Esophagus squamous epithelium (tissue), 5 donors: ENCODE measurements at regions of chr6 and their contacts with region 1.

Region 1: DNA sequence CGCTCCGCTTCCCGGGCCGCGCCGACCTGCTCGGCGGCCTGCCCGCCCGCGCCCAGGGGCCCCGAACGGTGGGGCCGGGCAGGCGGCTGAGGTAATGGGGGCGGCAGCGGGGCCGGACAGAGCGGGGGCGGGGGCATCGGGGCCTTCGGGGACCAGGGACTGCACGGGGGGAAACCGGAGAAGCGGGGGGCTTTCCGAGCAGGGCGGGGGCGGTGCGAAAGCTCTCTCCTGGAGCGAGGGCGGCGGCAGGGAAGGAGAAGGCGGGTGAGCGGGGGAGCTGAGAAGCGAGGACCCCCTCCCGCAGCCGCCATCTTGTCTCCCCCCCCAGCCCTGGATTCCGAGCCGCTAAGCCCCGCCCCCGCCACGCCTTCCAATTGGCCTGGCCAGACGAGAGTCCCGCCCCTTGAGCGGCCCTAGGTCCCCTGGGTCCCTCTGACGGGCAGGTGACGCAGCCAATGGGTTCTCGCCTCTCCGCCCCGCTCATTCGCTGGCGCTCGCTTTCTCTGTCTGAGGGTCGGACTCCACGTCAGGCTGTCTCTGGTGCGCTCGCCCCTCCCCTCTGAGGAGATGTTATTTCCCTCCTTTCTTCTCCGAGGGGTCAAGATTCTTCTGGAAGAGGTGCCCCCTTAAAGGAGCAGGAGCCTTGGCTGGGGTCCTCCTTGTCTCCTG is 470 bp downstream of the BRPF3 start:
- DNase-seq: peak; percentile 86
- H3K4me3 ChIP-seq: peak overlapping the region; percentile 80 to 97 (median 90)
- H3K27ac ChIP-seq: peak overlapping the region; percentile 97 to 99 (median 98)
- H3K4me1 ChIP-seq: peaks cover 9 to 41% (median 18%) of the 10 kb centered on the region in 3 donors
- H3K27me3 ChIP-seq: no peaks in the 10 kb centered on the region
- CTCF ChIP-seq: no peak
- POLR2A ChIP-seq: peak in 2 of 4 donors; percentile 18 to 75

Region 2: GRCh38 chr6:36129941-36130666 is 66.9 kb before region 1 on chr6 and contains the start of gene MAPK13:
- intact Hi-C with region 1: loop called (anchors 5 kb)
- DNase-seq: no peak
- H3K4me3 ChIP-seq: peak within 1 kb of the TSS; percentile 55 to 79 (median 74)
- H3K27ac ChIP-seq: peak within 1 kb of the TSS; percentile 81 to 98 (median 92)
- H3K4me1 ChIP-seq: peaks cover 18 to 72% (median 21%) of the 10 kb centered on the region in 3 donors
- H3K27me3 ChIP-seq: peaks cover 0 to 15% (median 0%) of the 10 kb centered on the region in 4 donors
- CTCF ChIP-seq: no peak
- POLR2A ChIP-seq: peak in 1 of 4 donors; percentile 19
- total RNA-seq, gene MAPK13: 62.2 to 136 (median 104) TPM

Region 3: DNA sequence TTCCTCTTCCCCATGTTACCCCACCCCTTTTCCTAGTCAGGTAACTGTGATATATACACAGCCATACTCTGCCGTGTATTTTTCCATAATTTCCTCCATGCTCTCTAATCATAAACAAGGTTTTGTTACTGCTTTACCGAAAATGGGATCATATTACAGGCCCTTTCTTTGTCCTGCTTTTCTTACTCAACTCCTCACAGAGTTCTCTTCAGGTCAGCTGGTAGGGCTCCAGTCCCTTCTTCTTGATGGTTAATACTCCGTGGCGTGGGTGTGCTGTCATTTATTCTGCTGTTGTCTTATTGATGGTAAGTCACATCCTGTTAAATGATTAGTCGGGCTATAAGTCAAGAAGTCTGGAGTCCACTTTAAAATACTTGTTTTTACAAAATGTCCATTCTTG is 732.6 kb after region 1 on chr6:
- intact Hi-C with region 1: no loop called
- DNase-seq: no peak
- H3K4me3 ChIP-seq: no peak overlapping the region
- H3K27ac ChIP-seq: no peak overlapping the region
- H3K4me1 ChIP-seq: peaks cover 0 to 28% (median 0%) of the 10 kb centered on the region in 3 donors
- H3K27me3 ChIP-seq: no peaks in the 10 kb centered on the region
- CTCF ChIP-seq: no peak
- POLR2A ChIP-seq: no peak